Tibial artery (tissue), 4 donors: ENCODE measurements at regions of chr13 and their contacts with region 1.

Region 1: GRCh38 chr13:48571126-48571913 is 38.4 kb upstream of the RCBTB2 start:
- DNase-seq: peak in 1 of 2 donors; percentile 35
- H3K4me3 ChIP-seq: peak overlapping the region; percentile 35 to 44
- H3K27ac ChIP-seq: peak overlapping the region; percentile 69 to 89
- H3K4me1 ChIP-seq: peaks cover 0 to 52% (median 19%) of the 10 kb centered on the region in 4 donors
- H3K27me3 ChIP-seq: no peaks in the 10 kb centered on the region
- CTCF ChIP-seq: no peak

Region 2: DNA sequence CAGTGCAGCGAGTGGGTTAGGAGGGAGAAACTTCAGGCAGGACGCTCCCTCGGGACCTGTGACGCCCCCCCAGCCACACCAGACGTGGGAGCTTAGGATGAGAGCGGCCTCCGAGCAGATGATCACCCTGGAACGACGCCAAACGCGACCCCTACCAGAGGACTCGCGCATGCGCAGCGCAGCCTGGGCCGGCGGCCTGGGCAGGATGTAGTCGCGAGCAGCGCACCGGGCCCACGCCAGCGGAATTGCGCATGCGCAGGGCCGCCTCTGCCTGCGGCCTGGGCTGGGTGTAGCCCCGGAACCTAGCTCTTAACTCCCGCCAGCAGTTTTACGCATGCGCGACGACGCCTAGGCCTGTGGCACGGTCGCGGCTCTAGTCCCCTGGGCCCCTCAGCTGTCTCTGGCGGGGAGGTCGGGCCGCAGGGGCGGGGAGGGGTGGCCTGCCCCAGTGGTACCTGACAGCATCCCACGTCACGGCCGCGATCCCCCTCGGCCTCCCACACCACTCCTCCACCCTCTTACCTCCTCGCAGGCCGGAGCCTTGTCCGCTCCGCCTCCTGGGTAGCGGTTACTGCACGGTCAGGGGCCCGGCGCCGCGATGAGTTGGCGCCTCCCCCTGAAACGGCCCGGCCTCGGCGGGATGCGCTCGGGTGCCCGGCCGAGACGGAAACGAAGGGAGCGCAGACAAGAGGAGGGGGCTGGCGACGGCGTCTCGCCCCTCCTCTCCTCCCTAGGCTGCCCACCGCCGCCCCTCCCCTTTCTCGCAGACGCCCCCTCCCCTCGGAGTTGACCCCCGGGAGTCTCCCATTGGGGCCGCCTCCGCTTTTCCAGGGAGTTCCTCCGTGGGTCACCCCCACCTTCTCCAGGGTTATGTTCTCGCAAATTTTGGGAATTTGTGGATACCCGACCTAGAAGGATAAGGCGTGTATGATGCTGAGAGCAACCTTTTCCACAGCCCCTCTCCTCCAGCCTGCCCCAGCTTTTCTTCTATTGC is 38.5 kb before region 1 on chr13 and contains the start of gene RCBTB2:
- intact Hi-C with region 1: loop called (anchors 5 kb)
- DNase-seq: peak; percentile 98 to 99
- H3K4me3 ChIP-seq: peak within 1 kb of the TSS; percentile 65 to 75
- H3K27ac ChIP-seq: peak within 1 kb of the TSS; percentile 92 to 94
- H3K4me1 ChIP-seq: peaks cover 0 to 23% (median 11%) of the 10 kb centered on the region in 4 donors
- H3K27me3 ChIP-seq: no peaks in the 10 kb centered on the region
- CTCF ChIP-seq: no peak

Region 3: DNA sequence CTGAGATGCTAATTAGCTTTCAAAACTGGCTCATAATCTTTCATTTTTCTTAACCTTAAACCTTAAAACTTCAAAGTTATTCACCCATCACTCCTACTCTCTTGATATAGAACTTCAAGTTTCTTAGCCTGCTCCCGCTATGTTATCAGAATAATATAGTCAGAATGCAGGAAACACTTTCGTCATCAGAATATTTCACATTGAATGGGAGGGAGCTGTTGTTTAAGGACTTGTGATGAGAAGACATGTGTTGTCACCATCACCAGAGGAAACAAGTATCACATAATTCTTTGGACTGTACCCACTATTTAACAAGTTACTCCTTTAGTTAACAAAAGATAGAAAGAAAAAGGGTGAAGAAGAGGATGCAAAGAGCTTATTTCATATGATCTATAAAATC is 339.4 kb after region 1 on chr13:
- intact Hi-C with region 1: no loop called
- DNase-seq: no peak
- H3K4me3 ChIP-seq: no peak overlapping the region
- H3K27ac ChIP-seq: no peak overlapping the region
- H3K4me1 ChIP-seq: peaks cover 0 to 12% (median 3%) of the 10 kb centered on the region in 4 donors
- H3K27me3 ChIP-seq: no peaks in the 10 kb centered on the region
- CTCF ChIP-seq: no peak